HCT116 (cell line): ENCODE measurements at regions of chr22 and their contacts with region 1.

Region 1: GRCh38 chr22:22877523-22878210 is 9.9 kb upstream of the IGLL5 start:
- DNase-seq: peak; percentile 54
- ATAC-seq: peak; percentile 89
- H3K4me3 ChIP-seq: no peak overlapping the region
- H3K27ac ChIP-seq: no peak overlapping the region
- H3K4me1 ChIP-seq: no peaks in the 10 kb centered on the region
- H3K27me3 ChIP-seq: no peaks in the 10 kb centered on the region
- CTCF ChIP-seq: peak; percentile 68 to 82 (median 71)
- POLR2A ChIP-seq: no peak
- RAD21 ChIP-seq: peak; percentile 74

Region 2: DNA sequence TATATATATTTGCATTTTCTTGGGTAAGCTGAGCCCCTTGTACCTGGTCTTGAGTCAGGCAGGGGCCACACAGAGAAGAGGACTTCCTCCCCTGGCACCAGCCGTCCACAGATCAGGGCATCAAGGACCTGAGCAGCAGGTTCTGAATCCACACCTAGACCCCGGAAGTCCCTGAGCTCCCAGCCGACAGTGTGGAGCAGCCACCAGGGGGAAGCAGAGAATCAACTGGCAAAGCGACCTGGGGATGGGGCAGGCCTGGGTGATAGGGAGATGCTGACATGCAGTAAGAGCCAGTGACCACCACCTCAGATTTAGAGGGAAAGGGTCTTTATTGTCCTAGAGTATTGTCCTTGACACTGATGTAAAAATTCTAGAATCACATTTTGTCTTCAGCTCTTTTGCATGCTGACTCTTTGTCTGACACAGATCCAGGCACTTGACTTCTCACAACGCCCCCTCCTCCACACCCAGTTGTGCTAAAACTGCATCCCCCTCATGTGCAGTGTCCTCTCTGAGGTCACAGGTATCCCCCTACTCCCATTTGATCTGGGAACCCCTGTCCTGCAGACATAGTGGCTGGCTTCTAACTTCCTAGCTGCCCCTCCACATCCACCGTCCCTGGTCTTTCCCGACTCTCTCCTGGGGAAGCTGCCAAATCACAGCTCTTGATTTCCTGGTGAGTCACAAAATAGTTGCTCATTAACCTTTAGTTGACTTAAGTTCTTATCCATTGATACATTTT is 124.0 kb before region 1 on chr22:
- CTCF ChIA-PET with region 1: interaction called, 17 read pairs
- POLR2A ChIA-PET with region 1: no interaction called
- RAD21 ChIA-PET with region 1: interaction called in 1 of 2 experiments, 4 read pairs
- intact Hi-C with region 1: loop called (anchors 5 kb)
- DNase-seq: peak; percentile 47
- ATAC-seq: peak; percentile 99
- H3K4me3 ChIP-seq: no peak overlapping the region
- H3K27ac ChIP-seq: no peak overlapping the region
- H3K4me1 ChIP-seq: peaks cover 0 to 4% of the 10 kb centered on the region in 2 experiments; a peak in 1 of 4 replicates
- H3K27me3 ChIP-seq: no peaks in the 10 kb centered on the region
- CTCF ChIP-seq: peak; percentile 59 to 93 (median 81)
- POLR2A ChIP-seq: no peak
- RAD21 ChIP-seq: peak; percentile 53

Region 3: DNA sequence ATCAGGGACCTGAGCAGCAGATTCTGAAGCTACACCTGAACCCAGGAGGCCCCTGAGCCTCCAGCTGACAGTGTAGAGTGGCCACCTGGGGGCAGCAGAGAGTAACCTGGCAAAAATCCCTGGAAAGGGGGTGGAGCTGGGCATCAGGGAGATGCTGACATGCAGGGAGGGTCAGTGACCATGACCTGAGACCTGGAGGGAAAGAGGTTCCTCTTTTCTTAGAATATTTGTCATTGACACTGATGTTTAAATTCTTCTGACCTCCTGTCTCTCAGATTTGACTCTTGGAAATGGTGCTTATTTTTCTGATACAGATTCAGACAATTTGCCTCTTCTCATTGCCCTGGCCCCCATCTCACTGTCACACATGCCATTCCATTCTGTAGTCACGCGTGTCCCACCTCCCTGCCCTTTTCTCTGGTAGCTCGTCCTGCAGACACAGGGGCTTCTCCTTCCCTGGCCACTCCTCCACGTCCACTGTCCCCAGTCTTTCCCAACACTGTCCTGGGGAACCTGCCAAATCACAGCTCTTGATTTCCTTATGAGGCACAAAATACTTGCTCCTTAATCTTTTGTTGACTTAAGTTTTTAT is 107.3 kb before region 1 on chr22:
- CTCF ChIA-PET with region 1: interaction called, 19 read pairs
- POLR2A ChIA-PET with region 1: no interaction called
- RAD21 ChIA-PET with region 1: interaction called in 1 of 2 experiments, 5 read pairs
- intact Hi-C with region 1: loop called (anchors 5 kb)
- DNase-seq: no peak
- ATAC-seq: peak; percentile 96
- H3K4me3 ChIP-seq: no peak overlapping the region
- H3K27ac ChIP-seq: no peak overlapping the region
- H3K4me1 ChIP-seq: no peaks in the 10 kb centered on the region
- H3K27me3 ChIP-seq: peaks cover 8% of the 10 kb centered on the region; the same call in 1 of the 2 replicates
- CTCF ChIP-seq: peak; percentile 59 to 94 (median 90); a peak in 5 of 6 replicates
- POLR2A ChIP-seq: no peak
- RAD21 ChIP-seq: peak; percentile 38; the same call in 1 of the 2 replicates

Region 4: DNA sequence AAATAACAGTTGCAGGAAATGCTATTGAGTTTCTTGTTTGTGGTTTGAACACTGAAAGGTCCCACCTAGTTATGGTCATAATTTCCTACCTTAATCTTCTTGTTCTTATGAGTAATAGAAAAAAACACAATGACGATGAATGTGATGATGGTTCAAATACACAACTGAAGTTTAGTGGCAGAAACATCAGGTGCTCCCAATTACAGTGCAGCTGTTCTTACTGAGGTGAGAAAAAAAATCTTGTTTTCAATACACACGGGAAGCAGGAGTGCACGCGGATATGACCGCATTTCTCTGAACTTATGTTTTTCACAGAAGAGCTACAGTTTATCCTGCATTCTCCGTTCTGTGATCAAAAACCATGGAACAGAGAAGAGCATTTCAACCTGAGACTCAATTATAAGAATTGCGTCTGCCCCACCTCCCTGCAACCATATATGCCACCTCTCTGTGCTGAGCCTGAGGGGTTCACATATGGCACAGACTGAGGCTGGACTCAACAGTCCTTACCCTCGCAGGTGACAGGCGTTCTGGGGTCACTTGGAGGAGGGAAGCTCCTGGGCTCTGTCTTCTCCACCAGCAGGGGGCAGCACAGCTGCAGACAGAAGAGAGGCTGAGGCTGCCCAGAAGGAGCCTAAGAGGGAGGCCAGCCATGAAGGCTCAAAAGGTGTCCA is 89.7 kb before region 1 on chr22:
- CTCF ChIA-PET with region 1: interaction called, 22 read pairs
- POLR2A ChIA-PET with region 1: no interaction called
- RAD21 ChIA-PET with region 1: no interaction called
- intact Hi-C with region 1: no loop called
- DNase-seq: peak; percentile 44
- ATAC-seq: peak; percentile 97
- H3K4me3 ChIP-seq: no peak overlapping the region
- H3K27ac ChIP-seq: no peak overlapping the region
- H3K4me1 ChIP-seq: no peaks in the 10 kb centered on the region
- H3K27me3 ChIP-seq: peaks cover 5% of the 10 kb centered on the region; the same call in 1 of the 2 replicates
- CTCF ChIP-seq: peak; percentile 50 to 97 (median 95); a peak in 5 of 6 replicates
- POLR2A ChIP-seq: no peak
- RAD21 ChIP-seq: peak; percentile 54; the same call in 1 of the 2 replicates

Region 5: GRCh38 chr22:22810018-22810427 is 67.6 kb before region 1 on chr22:
- CTCF ChIA-PET with region 1: interaction called, 31 read pairs
- POLR2A ChIA-PET with region 1: no interaction called
- RAD21 ChIA-PET with region 1: no interaction called
- intact Hi-C with region 1: no loop called
- DNase-seq: peak; percentile 36
- ATAC-seq: peak; percentile 100
- H3K4me3 ChIP-seq: no peak overlapping the region
- H3K27ac ChIP-seq: no peak overlapping the region
- H3K4me1 ChIP-seq: no peaks in the 10 kb centered on the region
- H3K27me3 ChIP-seq: no peaks in the 10 kb centered on the region
- CTCF ChIP-seq: peak; percentile 54 to 98 (median 97); a peak in 5 of 6 replicates
- POLR2A ChIP-seq: no peak
- RAD21 ChIP-seq: peak; percentile 66

Region 6: GRCh38 chr22:22848364-22848866 is 29.3 kb before region 1 on chr22:
- CTCF ChIA-PET with region 1: interaction called, 33 read pairs
- POLR2A ChIA-PET with region 1: no interaction called
- RAD21 ChIA-PET with region 1: interaction called, 5 to 7 read pairs
- intact Hi-C with region 1: loop called (anchors 5 kb)
- DNase-seq: peak; percentile 56
- ATAC-seq: peak; percentile 100
- H3K4me3 ChIP-seq: no peak overlapping the region
- H3K27ac ChIP-seq: no peak overlapping the region
- H3K4me1 ChIP-seq: no peaks in the 10 kb centered on the region
- H3K27me3 ChIP-seq: peaks cover 15% of the 10 kb centered on the region
- CTCF ChIP-seq: peak; percentile 62 to 98 (median 97); a peak in 5 of 6 replicates
- POLR2A ChIP-seq: no peak
- RAD21 ChIP-seq: peak; percentile 64

Region 7: DNA sequence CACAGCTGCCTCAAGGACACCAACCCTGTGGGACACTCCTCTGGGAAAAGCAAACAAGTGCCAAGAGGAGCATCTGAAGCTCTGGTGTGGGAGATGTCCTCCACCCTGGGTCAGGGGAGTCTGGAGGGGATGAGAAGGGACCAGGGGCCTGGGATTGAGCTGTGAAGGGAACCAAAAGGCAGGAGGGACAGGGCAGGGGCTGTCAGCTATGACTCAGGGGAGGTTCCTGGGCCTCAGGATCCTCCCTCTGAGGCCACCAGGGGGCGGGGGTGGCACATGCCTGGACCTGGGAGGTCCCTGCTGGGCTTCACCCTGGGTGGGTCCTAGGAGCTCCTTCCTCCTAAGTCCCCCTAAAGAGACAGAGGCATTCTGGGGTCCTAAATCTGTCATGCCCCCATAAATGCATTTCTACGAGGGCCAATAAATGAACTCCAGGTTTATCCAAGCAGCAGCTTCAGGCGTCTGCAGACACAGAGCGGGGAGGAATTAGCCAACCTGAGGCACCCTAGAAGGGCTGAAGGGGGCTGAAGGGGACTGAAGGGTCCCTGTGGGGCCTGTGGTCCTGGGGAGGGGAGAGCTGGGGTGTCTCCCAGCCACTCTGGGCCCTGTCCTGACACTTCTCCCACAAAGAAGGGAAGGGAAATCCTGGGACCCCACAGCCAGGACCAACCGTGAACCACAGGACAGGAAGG is 21.9 kb before region 1 on chr22:
- CTCF ChIA-PET with region 1: interaction called, 33 read pairs
- POLR2A ChIA-PET with region 1: no interaction called
- RAD21 ChIA-PET with region 1: no interaction called
- intact Hi-C with region 1: no loop called
- DNase-seq: no peak
- ATAC-seq: peak; percentile 99
- H3K4me3 ChIP-seq: no peak overlapping the region
- H3K27ac ChIP-seq: no peak overlapping the region; the same call in 1 of the 2 replicates
- H3K4me1 ChIP-seq: peaks cover 3 to 5% of the 10 kb centered on the region in 2 experiments; a peak in 1 of 4 replicates
- H3K27me3 ChIP-seq: peaks cover 39% of the 10 kb centered on the region
- CTCF ChIP-seq: peak; percentile 34 to 80 (median 63); a peak in 5 of 6 replicates
- POLR2A ChIP-seq: no peak
- RAD21 ChIP-seq: peak; percentile 19; the same call in 1 of the 2 replicates